ENCODE measurements at regions of chr9 and their contacts with region 1.

Region 1: DNA sequence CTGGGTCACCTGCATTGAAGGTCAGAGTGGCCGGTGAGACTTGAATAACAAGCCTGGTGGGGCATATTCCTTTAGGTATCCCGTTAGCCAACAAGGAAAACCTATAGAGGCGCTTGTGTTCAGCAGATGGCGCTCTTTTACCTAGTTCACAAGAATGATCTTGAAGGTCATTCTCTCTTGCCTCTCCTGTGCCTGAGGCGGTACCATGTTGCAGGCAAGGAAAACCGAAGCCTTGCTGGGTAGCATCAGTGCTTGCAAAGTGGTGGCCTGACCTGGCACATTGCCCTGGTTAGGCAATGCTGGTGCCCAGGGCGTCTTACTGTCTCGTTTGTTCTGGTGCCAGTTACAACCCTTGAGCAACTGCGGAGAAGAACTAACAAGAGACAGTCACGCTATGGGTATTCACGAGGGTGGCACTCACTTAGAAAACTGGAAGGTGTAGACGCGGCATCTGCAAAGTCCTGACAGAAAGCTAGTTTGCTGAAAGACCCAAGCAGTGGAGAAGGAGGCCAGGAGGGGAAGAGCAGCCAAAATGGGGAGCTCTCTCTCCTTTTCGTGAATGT is 56.7 kb downstream of the AOPEP start:
- DNase-seq: peak; percentile 55
- H3K4me3 Mint-ChIP-seq: no peak overlapping the region
- H3K27ac Mint-ChIP-seq: no peak overlapping the region
- H3K4me1 Mint-ChIP-seq: peaks cover 16% of the 10 kb centered on the region
- H3K27me3 Mint-ChIP-seq: no peaks in the 10 kb centered on the region

Region 2: GRCh38 chr9:94681508-94681907 is 101.7 kb before region 1 on chr9:
- CTCF ChIA-PET with region 1: interaction called, 14 read pairs
- POLR2A ChIA-PET with region 1: interaction called, 3 read pairs
- DNase-seq: peak; percentile 60
- H3K4me3 Mint-ChIP-seq: no peak overlapping the region
- H3K27ac Mint-ChIP-seq: no peak overlapping the region
- H3K4me1 Mint-ChIP-seq: no peaks in the 10 kb centered on the region
- H3K27me3 Mint-ChIP-seq: peaks cover 44% of the 10 kb centered on the region

Region 3: DNA sequence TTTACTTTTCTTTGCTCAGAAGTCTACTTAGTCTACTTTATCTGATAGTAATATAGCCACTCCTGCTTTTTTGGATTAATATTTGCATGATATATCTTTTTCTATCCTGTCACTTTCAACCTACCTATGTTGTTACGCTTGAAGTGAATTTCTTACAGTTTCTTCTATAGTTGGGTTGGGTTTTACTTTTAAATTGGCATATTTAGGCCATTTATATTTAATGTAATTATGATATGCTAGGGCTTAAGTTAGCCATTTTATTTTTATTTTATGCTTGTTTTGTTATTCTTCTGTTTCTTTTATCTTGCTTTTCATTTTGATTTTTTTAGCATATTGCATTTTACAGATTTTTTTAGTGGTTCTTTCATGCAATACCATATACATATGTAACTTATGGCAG is 108.0 kb after region 1 on chr9:
- CTCF ChIA-PET with region 1: no interaction called
- POLR2A ChIA-PET with region 1: no interaction called
- DNase-seq: no peak
- H3K4me3 Mint-ChIP-seq: no peak overlapping the region
- H3K27ac Mint-ChIP-seq: no peak overlapping the region
- H3K4me1 Mint-ChIP-seq: peaks cover 21% of the 10 kb centered on the region
- H3K27me3 Mint-ChIP-seq: no peaks in the 10 kb centered on the region

Measured in activated CD4-positive, alpha-beta memory T cell treated with anti-CD3 and anti-CD28 coated beads, Interleukin-2, amount 10 ng/mL, durations not matched to agents 7 days and 5 days (primary cell).